SK-N-SH (cell line): ENCODE measurements at regions of chr3 and their contacts with region 1.

Region 1: DNA sequence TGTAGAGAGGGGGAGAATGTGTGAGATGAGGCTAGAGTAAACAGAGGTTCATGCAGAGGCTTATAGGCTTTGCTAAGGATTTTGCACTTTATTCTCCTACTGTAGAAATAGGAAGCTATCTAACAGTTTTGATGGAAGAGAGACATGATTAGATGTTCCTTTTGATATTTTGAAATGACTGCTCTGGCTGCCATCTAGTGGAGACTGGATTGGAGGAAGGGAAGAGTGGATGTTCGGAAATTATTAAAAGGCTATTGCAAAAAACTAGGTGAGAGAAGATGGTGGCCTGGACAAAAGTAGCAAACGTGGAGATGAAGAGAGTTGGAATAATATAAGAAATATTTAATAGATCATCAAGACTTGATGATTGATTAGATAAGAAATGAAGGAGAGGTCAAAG is 42.2 kb downstream of the SYN2 start:
- DNase-seq: peak; percentile 42
- H3K4me3 ChIP-seq: no peak overlapping the region
- H3K27ac ChIP-seq: no peak overlapping the region
- H3K4me1 ChIP-seq: peaks cover 0 to 7% of the 10 kb centered on the region in 2 experiments; a peak in 2 of 4 replicates
- H3K27me3 ChIP-seq: no peaks in the 10 kb centered on the region
- CTCF ChIP-seq: peak; percentile 26; the same call in 1 of the 2 replicates
- EP300 ChIP-seq: no peak
- RAD21 ChIP-seq: peak; percentile 85

Region 2: DNA sequence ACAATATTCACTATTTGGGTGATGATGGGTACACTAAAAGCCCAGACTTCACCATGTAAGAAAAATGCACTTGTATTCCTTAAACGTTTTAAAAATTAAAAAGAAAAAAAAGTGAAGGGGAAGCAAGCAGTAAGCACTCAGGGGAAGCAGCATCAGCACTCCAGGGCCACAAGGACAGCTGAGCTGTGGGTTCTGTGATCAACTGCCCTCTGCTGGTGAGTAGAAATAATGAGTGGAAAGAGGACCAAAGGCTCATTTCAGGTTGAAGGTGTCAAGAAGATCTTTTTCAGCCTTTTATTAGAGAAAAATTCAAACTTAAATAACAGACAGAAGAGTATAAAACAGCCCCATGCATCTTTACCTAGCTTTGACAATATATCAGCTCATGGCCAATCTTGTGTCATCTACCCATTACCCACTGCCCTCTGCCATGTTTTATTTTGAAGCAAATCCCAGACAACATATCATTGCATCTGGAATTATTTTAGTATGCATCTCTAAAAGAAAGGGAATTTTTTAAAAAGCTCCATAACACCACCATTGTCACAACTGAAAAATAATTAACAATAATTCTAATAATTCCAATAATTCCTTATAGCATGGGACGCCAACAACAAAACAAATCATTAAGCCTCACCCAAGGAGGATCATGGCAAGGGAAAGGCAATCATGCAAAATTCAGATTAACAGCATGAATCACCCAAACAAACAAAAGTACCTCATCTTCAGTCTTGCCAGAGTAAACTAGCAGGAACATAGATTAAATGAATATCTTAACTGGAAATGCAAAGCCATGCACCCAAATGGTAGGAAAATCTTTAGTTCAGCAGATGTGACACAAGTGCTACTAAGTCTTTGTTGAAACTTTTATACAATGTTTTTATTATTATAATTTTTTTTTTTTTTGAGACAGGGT is 242.2 kb before region 1 on chr3:
- CTCF ChIA-PET with region 1: no interaction called
- POLR2A ChIA-PET with region 1: no interaction called
- DNase-seq: peak; percentile 57
- H3K4me3 ChIP-seq: no peak overlapping the region
- H3K27ac ChIP-seq: no peak overlapping the region
- H3K4me1 ChIP-seq: no peaks in the 10 kb centered on the region
- H3K27me3 ChIP-seq: no peaks in the 10 kb centered on the region
- CTCF ChIP-seq: peak; percentile 69
- EP300 ChIP-seq: no peak
- RAD21 ChIP-seq: peak; percentile 70

Region 3: GRCh38 chr3:11846281-11847034 is 199.9 kb before region 1 on chr3 and contains the start of gene TAMM41:
- CTCF ChIA-PET with region 1: interaction called, 15 read pairs
- POLR2A ChIA-PET with region 1: no interaction called
- DNase-seq: peak; percentile 88
- H3K4me3 ChIP-seq: peak within 1 kb of the TSS; percentile 87
- H3K27ac ChIP-seq: peak within 1 kb of the TSS; percentile 53 to 86
- H3K4me1 ChIP-seq: peaks cover 0 to 9% of the 10 kb centered on the region in 2 experiments; a peak in 3 of 4 replicates
- H3K27me3 ChIP-seq: no peaks in the 10 kb centered on the region; the same call in 1 of the 2 replicates
- CTCF ChIP-seq: peak; percentile 68
- EP300 ChIP-seq: 0 out of 4 replicates have a peak, but pooled peaks of 1 of the 2 experiments have one; percentile 34
- RAD21 ChIP-seq: peak; percentile 46
- polyA plus RNA-seq, gene TAMM41: 14.3 and 16.6 TPM in 2 replicates

Region 4: GRCh38 chr3:11907667-11908660 is 138.4 kb before region 1 on chr3:
- CTCF ChIA-PET with region 1: no interaction called
- POLR2A ChIA-PET with region 1: no interaction called
- DNase-seq: no peak
- H3K4me3 ChIP-seq: no peak overlapping the region
- H3K27ac ChIP-seq: no peak overlapping the region
- H3K4me1 ChIP-seq: no peaks in the 10 kb centered on the region
- H3K27me3 ChIP-seq: no peaks in the 10 kb centered on the region
- CTCF ChIP-seq: no peak
- EP300 ChIP-seq: no peak
- RAD21 ChIP-seq: no peak

Region 5: DNA sequence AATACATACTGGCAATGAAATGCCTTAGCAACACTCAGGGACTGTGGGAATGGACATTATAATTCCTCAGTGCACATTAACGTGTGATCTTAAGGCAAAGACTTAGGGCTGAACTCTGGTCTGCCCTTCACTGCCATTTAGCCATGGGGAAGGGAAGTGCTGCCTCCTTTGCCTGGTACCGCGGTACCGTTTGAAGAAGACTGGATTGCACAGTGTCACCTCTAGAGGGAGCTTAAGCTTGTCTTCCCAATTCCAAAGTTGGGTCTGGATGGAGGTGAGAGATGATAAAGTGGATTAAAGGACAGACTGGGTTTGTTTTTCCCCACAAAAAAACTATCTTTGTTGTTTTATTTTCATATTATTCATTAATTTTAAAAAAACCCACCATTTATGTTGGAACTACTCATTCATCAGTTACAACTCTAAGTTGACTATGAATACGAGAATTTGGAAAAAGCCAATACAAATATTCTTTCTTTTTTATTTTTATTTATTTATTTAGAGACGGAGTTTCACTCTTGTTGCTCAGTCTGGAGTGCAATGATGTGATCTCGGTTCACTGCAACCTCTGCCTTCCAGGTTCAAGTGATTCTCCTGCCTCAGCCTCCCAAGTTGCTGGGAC is 102.2 kb before region 1 on chr3:
- CTCF ChIA-PET with region 1: interaction called, 13 read pairs
- POLR2A ChIA-PET with region 1: no interaction called
- DNase-seq: peak; percentile 27
- H3K4me3 ChIP-seq: peak overlapping the region in 1 of 2 experiments; percentile 35; a peak in 1 of 4 replicates
- H3K27ac ChIP-seq: no peak overlapping the region
- H3K4me1 ChIP-seq: no peaks in the 10 kb centered on the region
- H3K27me3 ChIP-seq: no peaks in the 10 kb centered on the region
- CTCF ChIP-seq: peak; percentile 58
- EP300 ChIP-seq: no peak
- RAD21 ChIP-seq: peak; percentile 68

Region 6: GRCh38 chr3:12004741-12005513 is 41.5 kb before region 1 on chr3:
- CTCF ChIA-PET with region 1: interaction called, 10 read pairs
- POLR2A ChIA-PET with region 1: interaction called, 3 read pairs
- DNase-seq: peak; percentile 80
- H3K4me3 ChIP-seq: peak overlapping the region in 1 of 2 experiments; percentile 52; a peak in 2 of 4 replicates
- H3K27ac ChIP-seq: no peak overlapping the region
- H3K4me1 ChIP-seq: peaks cover 0 to 19% of the 10 kb centered on the region in 2 experiments; a peak in 2 of 4 replicates
- H3K27me3 ChIP-seq: peaks cover 29% of the 10 kb centered on the region; the same call in 1 of the 2 replicates
- CTCF ChIP-seq: no peak
- EP300 ChIP-seq: no peak
- RAD21 ChIP-seq: no peak